ENCODE measurements at regions of chr4 and their contacts with region 1.

Region 1: GRCh38 chr4:112765317-112765975 is 128.5 kb downstream of the LARP7 start:
- DNase-seq: no peak
- H3K4me3 ChIP-seq: no peak overlapping the region
- H3K27ac ChIP-seq: no peak overlapping the region
- H3K4me1 ChIP-seq: peaks cover 0 to 8% (median 2%) of the 10 kb centered on the region in 6 donors
- H3K27me3 ChIP-seq: no peaks in the 10 kb centered on the region
- CTCF ChIP-seq: peak in 5 of 11 experiments; percentile 24 to 49 (median 32)
- POLR2A ChIP-seq: no peak

Region 2: DNA sequence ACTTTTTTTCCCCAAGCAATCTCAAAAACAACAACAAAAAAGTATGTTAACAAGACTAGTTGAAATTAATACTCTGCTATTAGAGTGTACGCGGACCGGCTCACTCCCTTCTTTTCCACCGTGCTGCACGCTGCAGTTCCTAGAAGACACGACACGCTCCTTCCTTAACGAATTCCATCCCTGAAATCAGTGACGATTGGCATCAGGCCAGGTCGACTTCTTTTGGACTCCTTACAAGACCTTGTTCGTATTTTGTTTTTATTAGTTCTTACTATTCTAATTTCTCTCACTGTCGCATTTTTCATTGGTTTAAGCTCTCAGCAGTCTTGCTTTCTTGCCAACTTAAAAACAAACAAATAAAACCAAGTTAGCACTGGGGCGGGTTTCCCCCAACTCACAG is 1966.8 kb before region 1 on chr4:
- intact Hi-C with region 1: no loop called
- DNase-seq: no peak
- H3K4me3 ChIP-seq: no peak overlapping the region
- H3K27ac ChIP-seq: no peak overlapping the region
- H3K4me1 ChIP-seq: no peaks in the 10 kb centered on the region
- H3K27me3 ChIP-seq: no peaks in the 10 kb centered on the region
- CTCF ChIP-seq: no peak
- POLR2A ChIP-seq: no peak

Region 3: GRCh38 chr4:112633477-112634235 is 131.8 kb before region 1 on chr4:
- intact Hi-C with region 1: loop called (anchors 5 kb)
- DNase-seq: no peak
- H3K4me3 ChIP-seq: no peak overlapping the region
- H3K27ac ChIP-seq: no peak overlapping the region
- H3K4me1 ChIP-seq: peaks cover 16 to 42% (median 26%) of the 10 kb centered on the region in 6 donors
- H3K27me3 ChIP-seq: no peaks in the 10 kb centered on the region
- CTCF ChIP-seq: peak in 8 of 11 experiments; percentile 13 to 48 (median 43)
- POLR2A ChIP-seq: no peak

Region 4: GRCh38 chr4:112910109-112910736 is 144.8 kb after region 1 on chr4:
- intact Hi-C with region 1: no loop called
- DNase-seq: no peak
- H3K4me3 ChIP-seq: peak overlapping the region in 2 of 8 donors; percentile 6 to 45
- H3K27ac ChIP-seq: peak overlapping the region in 2 of 8 donors; percentile 8 to 45
- H3K4me1 ChIP-seq: peaks cover 0 to 5% (median 0%) of the 10 kb centered on the region in 6 donors
- H3K27me3 ChIP-seq: no peaks in the 10 kb centered on the region
- CTCF ChIP-seq: no peak
- POLR2A ChIP-seq: no peak